Caco-2 (cell line): ENCODE measurements at regions of chr16 and their contacts with region 1.

Region 1: GRCh38 chr16:75519881-75520280 is 16.0 kb downstream of the CHST5 start:
- DNase-seq: no peak
- H3K4me3 ChIP-seq: no peak overlapping the region
- H3K4me3 Mint-ChIP-seq: no peak overlapping the region
- H3K27ac Mint-ChIP-seq: no peak overlapping the region
- H3K4me1 ChIP-seq: no peaks in the 10 kb centered on the region
- H3K4me1 Mint-ChIP-seq: peaks cover 7% of the 10 kb centered on the region
- H3K27me3 ChIP-seq: no peaks in the 10 kb centered on the region
- H3K27me3 Mint-ChIP-seq: no peaks in the 10 kb centered on the region
- CTCF ChIP-seq: no peak

Region 2: GRCh38 chr16:75160386-75160785 is 359.5 kb before region 1 on chr16:
- CTCF ChIA-PET with region 1: no interaction called
- POLR2A ChIA-PET with region 1: no interaction called
- intact Hi-C with region 1: no loop called
- DNase-seq: no peak
- H3K4me3 ChIP-seq: no peak overlapping the region
- H3K4me3 Mint-ChIP-seq: no peak overlapping the region
- H3K27ac Mint-ChIP-seq: no peak overlapping the region
- H3K4me1 ChIP-seq: no peaks in the 10 kb centered on the region
- H3K4me1 Mint-ChIP-seq: no peaks in the 10 kb centered on the region
- H3K27me3 ChIP-seq: no peaks in the 10 kb centered on the region
- H3K27me3 Mint-ChIP-seq: no peaks in the 10 kb centered on the region
- CTCF ChIP-seq: no peak

Region 3: DNA sequence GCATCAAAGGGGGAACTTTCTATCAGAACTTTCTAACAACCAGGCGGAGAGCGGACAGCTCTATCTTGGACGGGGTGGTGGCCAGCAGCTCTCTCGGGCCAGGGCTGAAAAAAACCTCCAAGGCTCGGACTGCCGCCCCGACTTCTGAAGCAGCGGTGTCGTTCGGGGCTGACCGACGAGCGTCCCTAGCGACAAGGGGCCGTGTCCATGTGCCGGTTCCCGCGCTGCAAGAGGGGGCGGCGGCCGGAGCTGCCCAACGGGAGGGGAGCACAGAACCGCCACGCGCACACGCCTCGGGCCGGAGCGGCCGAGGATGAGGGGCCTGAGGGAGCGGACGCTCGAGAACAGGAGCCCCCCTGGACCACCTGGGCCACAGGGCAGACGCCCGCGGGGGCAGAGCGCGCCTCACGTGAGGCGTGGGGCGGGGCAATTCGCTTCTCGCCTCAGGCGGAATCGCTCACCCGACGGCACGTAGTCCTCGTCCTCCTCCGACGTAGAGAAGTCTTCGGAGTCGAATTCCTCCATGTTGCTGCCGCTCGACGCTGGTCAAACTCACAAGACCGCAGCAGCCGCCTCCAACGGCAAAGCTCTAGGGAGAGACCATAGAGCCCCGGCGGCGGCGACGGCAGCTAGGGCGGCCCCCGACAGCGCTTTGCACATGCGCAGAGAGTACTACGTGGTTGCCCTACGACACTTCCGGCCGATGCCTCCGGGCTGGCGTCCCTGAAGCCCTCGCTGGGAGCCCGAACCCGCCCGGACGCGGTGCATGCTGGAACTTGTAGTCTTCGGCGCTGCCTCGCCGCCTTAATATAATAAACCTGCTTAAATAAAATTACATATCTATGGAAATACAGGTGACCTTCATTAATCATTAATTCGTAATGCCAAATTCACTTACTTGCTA is 86.8 kb before region 1 on chr16 and contains the start of gene CFDP1:
- CTCF ChIA-PET with region 1: interaction called, 14 read pairs
- POLR2A ChIA-PET with region 1: interaction called, 7 read pairs
- intact Hi-C with region 1: no loop called
- DNase-seq: peak; percentile 96 to 97
- H3K4me3 ChIP-seq: peak within 1 kb of the TSS; percentile 81
- H3K4me3 Mint-ChIP-seq: peak within 1 kb of the TSS; percentile 81
- H3K27ac Mint-ChIP-seq: peak within 1 kb of the TSS; percentile 88
- H3K4me1 ChIP-seq: no peaks in the 10 kb centered on the region
- H3K4me1 Mint-ChIP-seq: peaks cover 14% of the 10 kb centered on the region
- H3K27me3 ChIP-seq: no peaks in the 10 kb centered on the region
- H3K27me3 Mint-ChIP-seq: no peaks in the 10 kb centered on the region
- CTCF ChIP-seq: peak in 1 of 2 experiments; percentile 13
- total RNA-seq, gene CFDP1: 71.6 and 77.6 TPM in 2 replicates

Region 4: DNA sequence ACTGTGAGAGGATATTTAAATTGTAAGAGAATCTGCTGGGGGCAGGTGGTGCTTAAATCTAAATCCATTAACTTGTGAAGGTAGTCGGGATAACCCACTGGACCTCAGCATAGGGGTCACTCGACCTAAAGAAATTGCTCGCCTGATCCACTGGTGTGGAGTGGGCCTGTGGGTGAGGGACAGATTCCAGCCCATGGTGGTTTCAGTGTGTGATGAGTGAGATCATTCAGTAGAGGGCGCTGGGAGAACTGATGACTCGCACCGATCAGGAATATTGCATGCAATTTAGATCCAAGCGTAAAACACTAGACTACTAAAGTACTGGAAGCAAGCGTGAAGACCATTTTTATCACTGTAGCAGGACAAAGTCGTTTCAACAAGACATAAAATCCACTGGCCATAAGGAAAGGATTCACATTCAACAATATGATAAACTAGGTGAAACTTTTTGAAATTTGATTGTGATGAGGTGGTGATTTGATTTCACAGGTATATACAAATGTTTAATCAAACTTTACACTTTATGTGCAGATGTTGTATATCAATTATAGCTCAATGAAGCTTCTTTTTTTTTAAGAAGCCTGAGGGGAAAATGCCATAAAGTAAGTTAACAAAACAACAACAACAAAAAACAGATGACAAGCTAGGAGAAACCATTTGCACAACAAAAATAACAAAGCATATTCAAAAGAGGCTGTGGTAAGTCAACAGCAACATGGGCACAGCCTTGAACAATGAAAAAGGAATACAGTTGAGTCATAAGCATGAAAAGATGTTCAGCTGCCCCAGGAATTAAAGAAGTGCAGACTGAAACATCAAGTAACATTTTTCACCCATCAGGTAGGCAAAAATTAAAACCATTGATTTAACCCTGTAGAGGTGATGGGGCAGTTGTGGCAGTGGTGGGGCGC is 47.9 kb before region 1 on chr16:
- CTCF ChIA-PET with region 1: interaction called, 11 read pairs
- POLR2A ChIA-PET with region 1: interaction called, 4 read pairs
- intact Hi-C with region 1: loop called (anchors 1 kb)
- DNase-seq: peak in 1 of 2 experiments; percentile 68
- H3K4me3 ChIP-seq: no peak overlapping the region
- H3K4me3 Mint-ChIP-seq: no peak overlapping the region
- H3K27ac Mint-ChIP-seq: no peak overlapping the region
- H3K4me1 ChIP-seq: no peaks in the 10 kb centered on the region
- H3K4me1 Mint-ChIP-seq: no peaks in the 10 kb centered on the region
- H3K27me3 ChIP-seq: no peaks in the 10 kb centered on the region
- H3K27me3 Mint-ChIP-seq: peaks cover 3% of the 10 kb centered on the region
- CTCF ChIP-seq: peak; percentile 77 to 83

Region 5: DNA sequence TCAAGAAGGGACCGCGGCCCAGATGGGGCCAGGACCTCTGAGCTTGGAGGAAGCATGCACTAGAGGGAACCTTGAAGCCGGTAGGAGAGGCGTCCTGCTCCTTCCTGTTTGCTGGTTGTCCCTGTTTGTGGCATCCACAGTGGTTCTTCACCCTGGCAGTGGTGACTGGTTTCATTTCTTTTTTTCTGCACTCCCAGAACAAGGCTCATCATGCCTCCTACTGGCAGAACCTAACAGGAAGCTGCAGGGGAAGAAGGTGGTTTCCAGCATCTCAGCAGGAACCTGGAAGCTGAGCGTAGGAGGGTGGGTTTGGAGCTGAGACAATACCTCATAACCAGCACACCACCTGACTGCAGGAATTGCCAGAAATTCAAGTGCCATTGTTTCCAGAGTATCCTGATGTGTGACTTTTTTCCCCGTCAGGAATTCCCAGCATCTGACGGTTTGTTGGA is 30.4 kb after region 1 on chr16:
- CTCF ChIA-PET with region 1: interaction called, 21 read pairs
- POLR2A ChIA-PET with region 1: no interaction called
- intact Hi-C with region 1: loop called (anchors 1 kb)
- DNase-seq: peak in 1 of 2 experiments; percentile 49
- H3K4me3 ChIP-seq: no peak overlapping the region
- H3K4me3 Mint-ChIP-seq: no peak overlapping the region
- H3K27ac Mint-ChIP-seq: no peak overlapping the region
- H3K4me1 ChIP-seq: no peaks in the 10 kb centered on the region
- H3K4me1 Mint-ChIP-seq: no peaks in the 10 kb centered on the region
- H3K27me3 ChIP-seq: no peaks in the 10 kb centered on the region
- H3K27me3 Mint-ChIP-seq: no peaks in the 10 kb centered on the region
- CTCF ChIP-seq: peak in 1 of 2 experiments; percentile 70

Region 6: DNA sequence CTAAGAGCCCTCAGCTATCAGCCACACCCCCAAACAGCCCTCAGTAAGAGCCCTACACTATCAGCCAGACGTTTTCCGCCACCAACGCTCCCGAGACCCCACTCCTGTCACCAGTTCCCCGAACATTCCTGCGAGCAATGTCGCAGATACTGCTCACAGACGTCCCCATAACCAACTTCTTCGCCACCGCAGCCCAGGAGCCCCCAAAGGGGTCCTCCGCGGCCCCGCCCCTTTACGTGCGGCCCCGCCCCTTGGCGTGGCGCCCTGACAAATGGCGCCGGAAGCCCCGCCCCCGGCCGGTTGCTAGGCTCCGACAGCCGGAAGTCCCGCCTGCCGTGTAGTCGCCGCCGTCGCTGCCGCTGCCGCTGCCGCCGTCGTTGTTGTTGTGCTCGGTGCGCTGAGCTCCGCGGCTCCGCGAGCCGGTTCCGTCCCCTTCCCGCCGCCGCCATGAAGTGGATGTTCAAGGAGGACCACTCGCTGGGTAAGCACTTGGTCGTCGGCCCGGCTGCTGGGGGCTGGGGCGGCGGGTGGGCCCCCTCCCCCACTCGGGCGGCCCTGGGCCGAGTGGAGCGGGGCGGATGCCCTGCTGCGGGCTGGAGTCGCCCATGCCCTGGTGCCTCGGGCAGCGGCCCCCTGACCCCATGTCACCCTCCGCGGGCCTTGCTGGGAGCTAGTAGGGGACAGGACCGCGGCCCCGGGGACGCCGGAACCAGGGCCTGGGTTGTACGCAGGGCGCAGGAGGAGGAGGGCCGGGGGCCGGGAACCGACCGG is 46.3 kb after region 1 on chr16 and contains the start of gene GABARAPL2:
- CTCF ChIA-PET with region 1: interaction called, 20 read pairs
- POLR2A ChIA-PET with region 1: interaction called, 8 read pairs
- intact Hi-C with region 1: loop called (anchors 1 kb)
- DNase-seq: peak; percentile 88 to 95
- H3K4me3 ChIP-seq: peak within 1 kb of the TSS; percentile 44
- H3K4me3 Mint-ChIP-seq: peak within 1 kb of the TSS; percentile 85
- H3K27ac Mint-ChIP-seq: peak within 1 kb of the TSS; percentile 58
- H3K4me1 ChIP-seq: 0 out of 2 replicates have a peak, but pooled peaks cover 10% of the 10 kb centered on the region
- H3K4me1 Mint-ChIP-seq: no peaks in the 10 kb centered on the region
- H3K27me3 ChIP-seq: no peaks in the 10 kb centered on the region
- H3K27me3 Mint-ChIP-seq: peaks cover 10% of the 10 kb centered on the region
- CTCF ChIP-seq: no peak
- total RNA-seq, gene GABARAPL2: 82.6 and 88.2 TPM in 2 replicates

Region 7: DNA sequence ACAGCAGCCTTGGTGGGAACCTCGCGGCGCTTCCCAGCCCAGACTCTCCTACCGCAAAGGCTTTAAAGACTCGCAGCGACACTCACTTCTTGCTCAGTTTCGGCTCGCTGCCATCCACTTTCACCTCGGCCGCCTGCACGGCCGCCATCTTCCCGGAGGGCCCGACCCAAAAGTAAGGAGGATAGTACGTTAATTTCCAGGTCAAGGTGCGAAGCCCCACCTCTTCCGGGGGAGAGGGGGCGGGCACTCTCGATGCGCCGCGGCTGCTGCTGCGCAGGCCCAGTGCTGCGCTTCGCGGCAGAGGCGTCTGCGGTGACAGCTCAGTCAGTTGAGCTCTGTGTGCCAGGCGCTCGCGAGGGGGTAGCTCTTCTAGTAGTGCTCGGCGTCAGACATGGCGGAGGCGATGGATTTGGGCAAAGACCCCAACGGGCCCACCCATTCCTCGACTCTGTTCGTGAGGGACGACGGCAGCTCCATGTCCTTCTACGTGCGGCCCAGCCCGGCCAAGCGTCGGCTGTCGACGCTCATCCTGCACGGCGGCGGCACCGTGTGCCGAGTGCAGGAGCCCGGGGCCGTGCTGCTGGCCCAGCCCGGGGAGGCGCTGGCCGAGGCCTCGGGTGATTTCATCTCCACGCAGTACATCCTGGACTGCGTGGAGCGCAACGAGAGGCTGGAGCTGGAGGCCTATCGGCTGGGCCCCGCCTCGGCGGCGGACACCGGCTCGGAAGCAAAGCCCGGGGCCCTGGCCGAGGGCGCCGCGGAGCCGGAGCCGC is 127.8 kb after region 1 on chr16 and contains the starts of genes KARS1 and TERF2IP:
- CTCF ChIA-PET with region 1: interaction called, 6 read pairs
- POLR2A ChIA-PET with region 1: interaction called, 14 read pairs
- intact Hi-C with region 1: loop called (anchors 1 kb)
- DNase-seq: peak; percentile 93 to 95
- H3K4me3 ChIP-seq: peak within 1 kb of the TSS; percentile 97
- H3K4me3 Mint-ChIP-seq: peak within 1 kb of the TSS; percentile 91
- H3K27ac Mint-ChIP-seq: peak within 1 kb of the TSS; percentile 98
- H3K4me1 ChIP-seq: peaks cover 12% of the 10 kb centered on the region
- H3K4me1 Mint-ChIP-seq: peaks cover 18% of the 10 kb centered on the region
- H3K27me3 ChIP-seq: no peaks in the 10 kb centered on the region
- H3K27me3 Mint-ChIP-seq: no peaks in the 10 kb centered on the region
- CTCF ChIP-seq: no peak
- total RNA-seq, gene KARS1: 244 and 245 TPM in 2 replicates
- total RNA-seq, gene TERF2IP: 25.1 and 27.1 TPM in 2 replicates